Gastrocnemius medialis (tissue), 4 donors: ENCODE measurements at regions of chr9 and their contacts with region 1.

Region 1: DNA sequence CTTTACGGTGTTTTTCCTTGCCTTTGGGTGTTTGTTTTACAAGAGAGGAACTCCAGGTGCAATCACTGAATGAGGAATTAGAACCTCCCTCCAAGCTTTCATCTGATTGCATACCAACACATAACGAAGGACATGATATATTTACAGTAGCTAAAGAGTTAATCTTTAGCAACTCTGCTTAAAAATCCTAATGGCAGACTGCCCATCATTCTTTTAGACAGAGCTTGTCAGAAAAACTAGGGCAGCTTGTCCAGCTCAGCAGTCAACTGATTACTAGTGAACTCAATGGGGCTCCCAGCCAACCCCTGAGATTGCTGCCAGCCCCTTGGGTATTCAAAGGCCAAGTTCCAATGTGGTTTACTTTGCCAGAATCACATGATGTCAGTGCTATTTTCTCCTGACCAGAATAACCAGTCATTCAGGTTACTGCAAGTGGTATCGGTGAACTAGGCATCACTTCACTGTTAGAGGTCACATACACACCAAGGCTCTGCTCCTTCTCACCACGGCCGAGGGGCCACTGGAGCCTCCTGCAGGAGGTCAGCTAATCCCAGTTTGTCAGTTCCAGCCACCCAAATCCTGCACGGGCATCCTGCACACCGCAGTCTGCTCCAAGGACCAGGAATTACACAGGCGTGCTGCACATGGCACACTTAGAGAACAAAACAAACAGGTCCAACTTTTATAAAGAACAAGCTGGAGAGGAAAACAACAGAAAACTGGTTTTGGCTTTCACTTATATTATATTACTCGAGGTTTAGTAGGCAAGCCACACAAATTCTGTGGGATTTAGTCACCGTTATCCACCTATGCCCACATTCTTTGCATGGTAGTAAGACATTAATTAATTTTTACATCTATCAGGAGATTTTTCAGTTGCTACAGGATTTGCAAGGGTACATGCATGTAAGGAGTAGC is 62.5 kb downstream of the NFIB start:
- DNase-seq: peak; percentile 81 to 90
- ATAC-seq: peak; percentile 98 to 99
- H3K4me3 ChIP-seq: peak overlapping the region; percentile 10 to 35 (median 26)
- H3K27ac ChIP-seq: peak overlapping the region; percentile 67 to 83 (median 78)
- H3K4me1 ChIP-seq: peaks cover 44 to 56% of the 10 kb centered on the region in 2 donors
- H3K27me3 ChIP-seq: no peaks in the 10 kb centered on the region
- CTCF ChIP-seq: no peak
- POLR2A ChIP-seq: peak in 1 of 2 donors; percentile 10

Region 2: DNA sequence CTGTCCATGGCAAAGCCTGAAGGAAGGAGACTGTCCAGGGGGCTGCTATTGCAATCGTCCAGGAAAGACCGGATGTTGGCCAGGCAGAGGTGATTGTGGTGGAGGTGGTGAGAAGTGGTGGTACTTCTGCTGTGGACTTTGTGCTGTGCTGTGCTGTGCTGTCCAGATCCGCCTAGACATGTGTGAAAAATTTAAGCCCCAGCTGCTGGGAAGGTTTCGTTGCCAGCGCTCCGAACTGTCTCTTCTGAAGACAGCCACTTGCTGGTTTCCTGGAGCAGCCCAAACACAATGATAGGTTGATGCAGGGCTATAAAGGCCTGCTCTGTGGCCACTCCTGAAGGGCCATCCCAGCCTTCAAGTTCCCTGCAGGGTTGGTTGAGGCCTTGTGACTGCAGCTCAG is 748.9 kb before region 1 on chr9:
- in situ Hi-C with region 1: no loop called
- intact Hi-C with region 1: no loop called
- DNase-seq: no peak
- ATAC-seq: peak in 1 of 2 donors; percentile 30
- H3K4me3 ChIP-seq: no peak overlapping the region
- H3K27ac ChIP-seq: no peak overlapping the region
- H3K4me1 ChIP-seq: no peaks in the 10 kb centered on the region
- H3K27me3 ChIP-seq: no peaks in the 10 kb centered on the region
- CTCF ChIP-seq: no peak
- POLR2A ChIP-seq: no peak

Region 3: GRCh38 chr9:14221558-14221957 is 29.9 kb before region 1 on chr9:
- in situ Hi-C with region 1: no loop called
- intact Hi-C with region 1: loop called (anchors 1 kb)
- DNase-seq: no peak
- ATAC-seq: peak; percentile 51 to 95
- H3K4me3 ChIP-seq: no peak overlapping the region
- H3K27ac ChIP-seq: peak overlapping the region in 3 of 4 donors; percentile 27 to 60 (median 51)
- H3K4me1 ChIP-seq: peaks cover 37 to 40% of the 10 kb centered on the region in 2 donors
- H3K27me3 ChIP-seq: no peaks in the 10 kb centered on the region
- CTCF ChIP-seq: no peak
- POLR2A ChIP-seq: no peak

Region 4: DNA sequence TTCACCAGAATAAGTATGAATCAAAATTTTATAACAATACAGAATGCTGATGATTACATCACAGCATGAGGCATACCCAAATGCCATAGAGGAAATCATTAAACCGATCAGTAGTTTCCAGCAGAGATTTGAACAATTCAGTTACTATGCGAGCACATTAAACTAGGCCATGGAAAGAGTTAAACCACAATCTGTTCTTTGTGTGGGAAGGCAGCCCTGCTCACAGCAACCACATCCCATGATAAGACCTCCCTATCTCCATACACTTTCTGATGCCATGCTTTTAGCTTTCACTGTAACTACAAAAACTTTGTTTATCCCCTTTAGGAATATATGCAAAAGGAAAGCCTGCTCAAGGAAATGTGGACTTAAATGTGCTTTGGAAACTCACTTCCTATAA is 58.0 kb after region 1 on chr9:
- in situ Hi-C with region 1: loop called in 1 of 4 experiments (anchors 10 kb)
- intact Hi-C with region 1: loop called (anchors 5 kb)
- DNase-seq: no peak
- ATAC-seq: no peak
- H3K4me3 ChIP-seq: peak overlapping the region; percentile 81 to 91 (median 86)
- H3K27ac ChIP-seq: peak overlapping the region; percentile 92 to 99 (median 98)
- H3K4me1 ChIP-seq: peaks cover 45 to 56% of the 10 kb centered on the region in 2 donors
- H3K27me3 ChIP-seq: no peaks in the 10 kb centered on the region
- CTCF ChIP-seq: no peak
- POLR2A ChIP-seq: no peak

Region 5: DNA sequence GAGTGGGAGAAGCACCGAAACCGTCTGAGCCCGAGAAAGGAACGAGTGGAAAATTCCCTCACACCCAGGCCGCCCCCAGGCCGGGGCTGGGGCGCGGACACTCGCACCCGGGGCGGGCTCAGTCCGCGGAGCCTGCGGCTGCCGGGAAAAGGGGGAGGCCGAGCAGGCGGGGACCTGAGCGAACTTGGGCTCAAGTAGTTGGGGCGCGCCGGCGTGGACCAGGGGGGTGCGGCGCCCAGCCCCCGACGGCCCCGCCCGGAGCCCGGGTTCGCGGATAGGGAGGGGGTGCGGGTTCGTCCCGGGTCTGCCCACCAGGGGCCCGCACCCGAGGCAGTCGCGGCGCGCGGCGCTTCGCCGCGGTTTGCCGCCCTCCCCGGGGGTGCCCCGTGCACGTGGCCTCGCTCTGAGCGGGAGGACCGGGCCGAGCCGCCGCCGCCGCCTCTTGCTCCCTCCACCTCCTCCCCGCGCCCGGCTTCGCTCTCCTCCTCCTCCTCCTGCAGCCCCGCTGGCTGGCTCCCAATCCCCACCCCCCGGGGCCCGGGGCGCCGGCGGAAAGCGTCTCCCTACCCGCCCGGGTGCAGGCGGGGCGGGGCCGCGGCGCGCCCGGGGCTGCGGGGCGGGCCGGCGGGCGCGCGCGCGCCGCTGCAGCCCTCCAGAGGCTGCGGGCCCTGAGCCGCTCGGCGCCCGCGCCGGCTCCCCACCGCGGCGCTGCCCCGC is 63.7 kb after region 1 on chr9:
- in situ Hi-C with region 1: no loop called
- intact Hi-C with region 1: loop called (anchors 5 kb)
- DNase-seq: peak; percentile 91 to 95
- ATAC-seq: peak; percentile 43 to 51
- H3K4me3 ChIP-seq: peak overlapping the region; percentile 81 to 91 (median 86)
- H3K27ac ChIP-seq: peak overlapping the region; percentile 92 to 99 (median 98)
- H3K4me1 ChIP-seq: peaks cover 40 to 43% of the 10 kb centered on the region in 2 donors
- H3K27me3 ChIP-seq: no peaks in the 10 kb centered on the region
- CTCF ChIP-seq: peak in 2 of 5 experiments; percentile 15 to 22
- POLR2A ChIP-seq: peak; percentile 88 to 92